ENCODE measurements at regions of chr11 and their contacts with region 1.

Region 1: DNA sequence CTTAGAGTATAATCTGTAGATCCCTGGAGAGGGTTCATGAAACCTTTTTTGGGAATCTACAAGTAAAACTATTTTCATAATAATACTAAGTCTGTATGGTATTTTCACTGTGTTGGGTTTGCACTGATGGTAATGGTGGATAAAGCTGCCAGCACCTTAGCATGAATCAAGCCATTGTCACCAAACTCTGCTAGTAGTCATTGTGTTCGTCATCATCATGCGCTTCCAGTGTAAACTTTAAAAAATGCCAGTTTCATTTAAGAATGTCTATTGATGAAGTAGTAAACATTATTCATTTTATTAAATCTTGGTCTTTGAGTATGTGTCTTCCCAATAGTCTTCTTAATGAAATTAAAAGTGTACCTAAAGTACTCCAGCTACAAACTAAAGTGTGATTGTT is 15.0 kb downstream of the ALKBH3 start:
- DNase-seq: no peak
- H3K4me3 Mint-ChIP-seq: no peak overlapping the region
- H3K27ac Mint-ChIP-seq: no peak overlapping the region
- H3K4me1 Mint-ChIP-seq: no peaks in the 10 kb centered on the region
- H3K27me3 Mint-ChIP-seq: no peaks in the 10 kb centered on the region

Region 2: DNA sequence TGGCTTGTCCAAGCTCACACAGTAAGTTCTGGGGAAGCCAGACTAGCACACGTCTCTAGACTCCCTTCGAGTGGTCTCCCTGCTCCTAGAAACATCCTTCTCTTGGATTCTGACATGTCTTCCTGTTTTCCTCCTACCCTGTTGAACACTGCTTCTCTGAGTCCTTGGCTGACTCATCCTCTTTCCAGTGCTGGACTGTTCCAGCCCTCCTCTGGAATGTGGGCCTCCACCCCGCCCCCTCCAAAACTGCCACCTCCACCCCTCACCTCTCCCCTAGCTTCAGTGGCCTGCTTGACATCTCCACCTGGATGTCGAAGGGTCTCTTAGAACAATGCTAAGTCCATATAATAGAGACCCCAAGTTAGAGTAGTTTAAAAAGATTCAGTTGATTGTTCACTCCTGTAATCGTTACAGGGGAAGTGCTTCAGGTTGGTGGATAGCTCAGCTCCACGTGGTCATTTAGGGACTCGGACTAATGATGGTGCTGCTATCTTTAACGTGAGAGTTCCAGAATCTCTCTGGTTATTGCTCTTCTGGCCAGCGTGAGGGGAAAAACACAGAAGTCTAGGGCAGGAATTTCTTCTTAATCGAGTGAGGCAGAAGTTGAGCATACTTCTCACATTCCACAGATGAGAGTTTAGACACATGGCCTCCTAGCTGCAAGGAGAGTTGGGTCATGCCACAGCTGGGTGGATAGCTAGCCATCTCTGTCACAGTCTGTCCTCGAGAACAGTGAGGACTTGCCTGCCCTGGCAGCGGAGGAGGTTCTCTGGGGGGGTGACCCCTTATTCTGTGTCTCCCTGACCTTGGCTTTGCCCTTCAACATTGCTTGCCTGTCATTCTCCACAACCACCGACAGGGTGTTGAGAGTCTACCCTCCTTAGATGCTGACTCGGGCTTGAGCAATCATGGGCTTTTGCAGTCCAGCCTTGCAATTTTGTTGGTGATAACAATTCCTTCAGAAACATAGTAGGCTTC is 42.1 kb after region 1 on chr11:
- intact Hi-C with region 1: no loop called
- DNase-seq: no peak
- H3K4me3 Mint-ChIP-seq: no peak overlapping the region
- H3K27ac Mint-ChIP-seq: no peak overlapping the region
- H3K4me1 Mint-ChIP-seq: peaks cover 2% of the 10 kb centered on the region
- H3K27me3 Mint-ChIP-seq: peaks cover 40% of the 10 kb centered on the region

Region 3: DNA sequence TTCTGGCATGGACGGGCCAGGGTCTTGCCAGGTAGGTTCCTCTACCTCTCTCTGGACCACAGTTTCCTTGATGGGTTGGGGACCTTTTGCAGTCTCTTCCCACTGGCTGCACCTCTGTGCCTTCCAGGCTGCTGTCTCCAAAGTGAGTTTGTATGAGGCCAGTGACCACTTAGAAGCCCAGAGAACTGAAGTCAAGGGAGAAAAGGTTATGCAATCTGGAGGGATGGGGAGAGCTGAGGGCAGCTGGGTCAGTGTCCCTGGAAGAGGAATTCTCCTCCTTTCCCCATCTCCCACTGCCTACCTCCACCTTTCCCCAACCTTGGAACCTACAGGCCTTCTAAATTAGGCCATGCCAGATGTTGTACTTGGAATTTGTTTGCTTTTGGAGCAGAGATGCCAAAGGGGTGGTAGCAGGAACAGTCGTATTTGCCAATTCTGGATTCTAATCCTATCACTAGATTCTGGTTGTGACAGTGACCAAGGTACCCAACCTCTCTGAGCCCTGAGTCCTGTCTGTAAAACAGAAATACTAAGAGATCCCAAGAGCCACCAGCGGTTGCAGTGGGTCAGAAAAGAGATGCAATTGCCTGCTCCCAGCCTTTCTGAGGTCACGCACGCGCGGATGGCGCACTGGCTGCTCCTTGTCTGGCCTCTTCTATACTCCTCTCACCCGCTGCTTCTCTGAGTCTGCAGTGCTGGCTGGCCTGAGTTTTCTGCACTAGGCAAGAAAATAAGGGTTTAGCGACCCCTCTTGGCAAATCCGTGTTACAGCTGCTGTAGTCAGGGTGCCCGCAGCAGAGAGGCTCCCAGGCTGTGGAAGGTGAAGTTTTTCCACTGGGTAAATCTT is 141.4 kb after region 1 on chr11:
- intact Hi-C with region 1: loop called (anchors 2 kb)
- DNase-seq: no peak
- H3K4me3 Mint-ChIP-seq: no peak overlapping the region
- H3K27ac Mint-ChIP-seq: no peak overlapping the region
- H3K4me1 Mint-ChIP-seq: no peaks in the 10 kb centered on the region
- H3K27me3 Mint-ChIP-seq: peaks cover 2% of the 10 kb centered on the region